ENCODE measurements at regions of chr17 and their contacts with region 1.

Region 1: DNA sequence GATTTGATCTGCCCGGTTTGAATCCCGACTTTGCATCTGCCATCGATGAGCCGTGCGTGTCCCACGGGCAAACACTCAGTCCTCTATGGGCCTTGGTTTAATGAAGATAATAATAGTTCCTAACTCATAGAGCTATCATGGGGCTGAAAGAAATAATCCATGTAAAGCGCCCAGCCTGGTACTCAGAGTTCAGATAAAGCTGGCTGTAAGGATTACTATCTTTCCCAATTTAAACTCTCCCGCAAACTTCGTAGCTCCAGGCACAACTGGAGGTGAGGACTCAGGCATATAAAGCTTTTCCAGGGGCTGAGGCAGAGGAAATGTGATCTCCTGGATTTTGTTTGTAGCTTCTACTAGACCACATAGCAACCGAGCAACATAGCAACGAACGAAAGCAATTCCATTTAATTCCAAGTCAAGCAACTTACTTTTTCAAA is 16.3 kb downstream of the ALOX15 start:
- DNase-seq: no peak
- H3K4me3 ChIP-seq: no peak overlapping the region
- H3K27ac ChIP-seq: no peak overlapping the region
- H3K4me1 ChIP-seq: peaks cover 0 to 4% of the 10 kb centered on the region in 2 donors
- H3K27me3 ChIP-seq: no peaks in the 10 kb centered on the region
- CTCF ChIP-seq: no peak

Region 2: DNA sequence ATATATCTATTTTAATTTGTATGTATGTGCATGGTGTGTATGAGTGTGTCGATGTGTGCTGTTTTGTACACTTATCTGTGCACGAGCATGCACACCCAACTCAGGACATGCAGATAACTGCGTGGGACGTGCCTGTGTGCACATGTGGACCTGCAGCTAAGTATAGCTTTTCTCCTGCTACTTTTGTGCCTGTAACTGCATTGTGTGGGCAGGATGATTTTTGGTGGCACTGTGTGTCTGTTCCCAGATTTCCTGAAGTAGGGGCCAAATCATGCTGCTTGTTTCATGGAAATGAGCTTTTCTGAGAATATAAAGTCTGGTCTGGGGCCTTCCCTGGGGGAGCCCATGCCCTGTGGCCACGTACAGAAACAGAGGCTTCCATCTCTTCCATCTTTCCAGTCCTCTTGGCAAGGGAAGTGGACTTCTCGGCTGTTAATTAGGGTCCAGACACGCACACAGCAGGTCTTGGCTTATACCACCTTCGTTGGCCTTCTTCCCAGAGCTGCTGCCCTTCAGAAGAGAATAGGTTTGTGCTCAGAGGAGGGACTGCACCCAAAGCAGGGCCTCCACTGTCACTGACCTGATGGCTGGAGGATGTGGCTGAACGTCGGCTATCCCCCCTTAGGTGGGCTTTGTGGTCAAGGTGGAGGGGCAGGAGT is 161.3 kb before region 1 on chr17:
- intact Hi-C with region 1: no loop called
- DNase-seq: no peak
- H3K4me3 ChIP-seq: no peak overlapping the region
- H3K27ac ChIP-seq: no peak overlapping the region
- H3K4me1 ChIP-seq: no peaks in the 10 kb centered on the region
- H3K27me3 ChIP-seq: no peaks in the 10 kb centered on the region
- CTCF ChIP-seq: no peak

Region 3: DNA sequence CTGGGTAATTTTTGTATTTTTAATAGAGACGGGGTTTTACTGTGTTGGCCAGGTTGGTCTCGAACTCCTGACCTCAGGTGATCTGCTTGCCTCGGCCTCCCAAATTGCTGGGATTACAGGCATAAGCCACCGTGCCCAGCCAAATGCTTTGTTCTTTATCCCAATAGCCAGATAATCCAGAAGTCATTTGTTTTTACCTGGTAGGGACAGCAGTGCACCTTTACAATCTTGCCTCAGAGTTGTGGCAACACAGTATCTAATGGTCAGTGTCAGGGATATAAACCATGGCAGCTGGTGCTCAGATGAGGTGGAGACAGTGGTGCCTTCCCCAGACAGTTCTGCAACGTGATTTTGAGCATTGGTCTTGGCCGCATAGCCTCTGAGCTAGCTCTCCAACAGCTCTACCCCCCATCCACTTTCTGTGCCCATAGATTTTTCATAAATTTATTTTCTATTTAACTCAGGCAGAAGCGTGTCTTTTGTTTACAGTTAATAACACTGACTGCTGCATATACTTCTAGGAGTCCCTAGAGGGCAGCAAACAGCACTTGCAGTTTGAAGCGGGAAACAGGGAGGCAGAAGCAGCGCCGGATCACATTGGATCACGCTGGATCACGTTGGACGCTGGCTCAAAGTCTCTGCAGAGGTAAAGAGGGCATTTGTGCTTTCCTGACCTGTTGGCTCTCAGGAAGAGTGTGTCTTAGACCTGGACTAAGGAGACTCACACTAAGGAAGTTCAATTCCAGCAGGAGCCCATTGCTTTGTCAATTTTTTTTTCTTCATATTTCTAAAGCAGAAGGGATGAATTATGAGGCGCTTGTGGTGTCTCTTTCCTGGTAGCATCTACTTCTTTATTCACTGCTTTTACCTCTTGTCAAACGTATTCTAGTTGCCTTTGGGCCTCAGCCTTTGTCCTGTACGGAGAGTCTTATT is 59.7 kb before region 1 on chr17:
- intact Hi-C with region 1: loop called (anchors 2 kb)
- DNase-seq: peak in 1 of 2 donors; percentile 81
- H3K4me3 ChIP-seq: no peak overlapping the region
- H3K27ac ChIP-seq: no peak overlapping the region
- H3K4me1 ChIP-seq: peaks cover 6 to 10% of the 10 kb centered on the region in 2 donors
- H3K27me3 ChIP-seq: no peaks in the 10 kb centered on the region
- CTCF ChIP-seq: peak; percentile 50 to 83 (median 83)